ENCODE measurements at regions of chr1 and their contacts with region 1.

Region 1: DNA sequence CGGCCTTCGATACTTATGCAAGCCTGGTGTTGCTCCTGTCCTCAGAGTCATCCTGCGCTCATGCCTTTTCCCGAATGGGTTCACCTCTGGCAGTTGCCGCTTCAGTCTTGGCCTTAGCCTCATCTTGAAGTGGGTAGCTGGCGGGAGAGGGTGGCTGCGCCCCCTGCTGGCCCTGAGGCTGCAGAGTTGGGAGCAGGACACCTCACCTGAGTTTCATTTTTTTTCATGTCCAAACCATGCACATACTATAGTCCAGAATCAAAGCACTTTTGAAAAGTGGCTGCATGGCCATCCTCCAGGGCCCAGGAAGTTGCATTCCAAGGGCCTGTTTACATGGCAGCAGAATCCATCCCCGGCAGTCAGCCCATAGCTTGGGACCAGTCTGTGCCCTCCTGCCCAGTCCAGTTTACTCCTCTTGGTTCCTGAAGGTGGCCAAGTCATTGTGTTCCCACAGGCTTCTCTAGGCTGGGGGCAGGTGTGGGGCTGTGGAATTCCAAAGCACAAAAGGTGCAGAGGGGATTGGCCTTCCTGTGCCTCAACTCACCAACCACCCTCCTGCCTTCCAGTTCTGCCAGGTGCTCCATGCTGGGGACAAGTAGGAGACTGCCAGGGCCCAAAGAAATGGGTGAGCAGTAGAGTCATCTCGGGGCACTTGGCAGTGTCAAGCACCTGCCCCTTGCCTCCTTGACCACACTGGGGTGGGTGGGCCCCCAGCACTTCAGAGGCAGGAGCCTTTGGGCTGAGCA is 44.0 kb downstream of the YARS1 start:
- H3K4me3 Mint-ChIP-seq: no peak overlapping the region
- H3K27ac Mint-ChIP-seq: no peak overlapping the region
- H3K4me1 Mint-ChIP-seq: peaks cover 17% of the 10 kb centered on the region
- H3K27me3 Mint-ChIP-seq: no peaks in the 10 kb centered on the region

Region 2: DNA sequence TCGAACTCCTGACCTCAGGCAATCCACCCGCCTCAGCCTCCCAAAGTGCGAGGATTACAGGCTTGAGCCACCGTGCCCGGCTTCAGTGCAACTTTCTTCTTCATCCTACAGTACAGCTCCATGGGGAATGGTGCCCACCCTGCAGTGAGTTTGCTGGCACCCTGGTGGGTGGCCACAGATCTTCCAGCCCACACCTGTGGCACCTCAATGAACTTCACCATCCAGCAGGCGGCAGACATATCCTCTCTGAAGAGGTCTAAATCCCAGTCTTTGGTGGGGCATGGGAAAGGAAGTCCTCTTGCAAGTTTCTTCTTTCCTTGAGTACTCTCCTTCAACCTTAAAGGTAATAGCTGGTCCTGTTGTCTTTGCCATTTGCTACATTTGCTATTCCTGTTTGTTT is 252.0 kb before region 1 on chr1:
- intact Hi-C with region 1: loop called (anchors 1 kb)
- H3K4me3 Mint-ChIP-seq: peak overlapping the region; percentile 51
- H3K27ac Mint-ChIP-seq: peak overlapping the region; percentile 41
- H3K4me1 Mint-ChIP-seq: peaks cover 5% of the 10 kb centered on the region
- H3K27me3 Mint-ChIP-seq: peaks cover 9% of the 10 kb centered on the region

Region 3: DNA sequence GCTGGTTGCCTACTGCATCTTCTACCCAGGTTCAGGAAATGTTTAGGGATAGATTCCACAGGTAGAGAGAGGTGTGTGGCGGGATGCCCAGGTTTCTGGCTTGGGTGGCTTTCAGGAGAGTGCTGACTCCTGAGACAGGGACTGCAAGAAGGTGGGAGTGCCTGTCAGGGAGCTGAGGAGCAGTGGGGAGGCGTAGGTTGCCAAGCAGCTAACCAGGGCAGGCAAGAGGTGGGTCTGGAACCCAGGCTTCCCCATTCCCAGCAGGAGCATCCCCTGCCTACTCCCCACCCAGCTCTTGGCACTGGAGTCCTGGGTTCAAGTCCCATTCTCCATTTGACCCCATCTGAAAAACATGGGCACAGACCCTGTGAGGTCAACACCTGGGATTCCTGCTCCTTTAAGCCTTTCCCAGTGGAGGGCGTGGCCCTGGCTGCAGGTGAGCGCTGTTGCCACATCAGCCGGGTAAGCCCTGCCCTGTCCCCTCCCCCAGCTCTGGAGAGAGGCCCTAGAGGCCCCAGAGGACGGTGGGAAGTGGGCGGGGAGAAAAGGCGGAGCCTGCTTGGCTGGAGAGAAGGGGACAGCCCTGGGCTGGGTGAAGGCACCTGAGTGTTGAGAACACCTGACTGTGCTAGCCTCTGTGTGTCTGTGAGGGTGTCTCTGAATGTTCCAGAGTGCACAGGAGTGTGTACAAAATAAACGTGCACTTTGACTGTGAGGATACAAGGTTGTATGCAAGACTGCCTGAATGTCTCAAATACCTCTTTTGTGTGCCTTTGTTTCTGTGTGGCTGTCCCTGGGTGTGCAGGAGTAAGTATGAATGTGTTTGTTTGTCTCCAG is 56.7 kb before region 1 on chr1:
- intact Hi-C with region 1: loop called (anchors 1 kb)
- H3K4me3 Mint-ChIP-seq: no peak overlapping the region
- H3K27ac Mint-ChIP-seq: no peak overlapping the region
- H3K4me1 Mint-ChIP-seq: peaks cover 27% of the 10 kb centered on the region
- H3K27me3 Mint-ChIP-seq: peaks cover 30% of the 10 kb centered on the region

Region 4: DNA sequence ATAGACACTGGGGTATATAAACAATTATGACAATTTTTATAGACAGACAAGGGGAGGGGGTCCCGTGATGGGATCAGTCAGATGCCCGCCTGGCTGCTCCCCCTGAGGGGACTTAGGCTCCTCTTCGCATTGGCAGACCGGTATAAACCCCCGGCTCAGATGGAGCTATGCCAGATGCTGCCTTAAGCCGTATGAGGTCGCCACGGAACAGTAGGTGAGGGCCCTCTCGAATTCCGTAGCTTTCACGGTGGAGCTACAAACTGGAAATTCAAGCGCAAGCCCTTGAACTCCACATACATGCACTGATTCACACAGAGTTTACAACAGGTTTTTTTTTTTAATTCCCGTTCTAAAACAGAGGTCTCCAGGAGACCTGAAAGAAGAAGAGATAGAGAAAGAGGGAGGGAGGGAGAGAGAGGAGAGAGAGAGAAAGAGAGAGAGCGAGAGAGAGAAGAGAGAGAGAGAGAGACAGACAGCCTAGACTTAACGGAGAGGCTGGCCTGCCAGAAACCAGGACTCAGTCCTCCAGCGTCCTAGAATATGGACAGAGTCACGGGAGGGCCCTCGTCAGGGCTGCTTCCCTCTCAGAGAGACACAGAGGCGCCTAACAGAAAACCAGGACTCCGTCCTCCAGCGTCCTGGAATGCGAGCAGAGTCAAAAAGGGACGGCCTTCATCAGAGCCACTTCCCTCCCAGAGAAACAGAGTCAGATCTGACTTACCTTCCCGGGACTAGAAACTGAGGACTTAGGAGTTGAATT is 152.4 kb after region 1 on chr1:
- intact Hi-C with region 1: no loop called
- H3K4me3 Mint-ChIP-seq: no peak overlapping the region
- H3K27ac Mint-ChIP-seq: peak overlapping the region; percentile 50
- H3K4me1 Mint-ChIP-seq: peaks cover 22% of the 10 kb centered on the region
- H3K27me3 Mint-ChIP-seq: peaks cover 61% of the 10 kb centered on the region

Measured in dendritic cell treated with granulocyte-macrophage colony-stimulating factor and Interleukin-4, amounts not matched to agents 40 ng/mL and 50 ng/mL, for 4 days (primary cell).